Activated T-helper 2 cell treated with anti-CD3 and anti-CD28 coated beads, Interferon-gamma antibody, Interleukin-2, Interleukin-4, amounts not matched to agents 10 μg/mL and 5 μg/mL and 100 μg/mL, durations not matched to agents 14 hours and 24 hours and 36 hours (primary cell): ENCODE measurements at regions of chr12 and their contacts with region 1.

Region 1: GRCh38 chr12:19312637-19313036 is 126.7 kb upstream of the AEBP2 start:
- DNase-seq: no peak
- H3K4me3 Mint-ChIP-seq: no peak overlapping the region
- H3K27ac Mint-ChIP-seq: peak overlapping the region; percentile 20
- H3K4me1 Mint-ChIP-seq: peaks cover 20% of the 10 kb centered on the region
- H3K27me3 Mint-ChIP-seq: no peaks in the 10 kb centered on the region

Region 2: DNA sequence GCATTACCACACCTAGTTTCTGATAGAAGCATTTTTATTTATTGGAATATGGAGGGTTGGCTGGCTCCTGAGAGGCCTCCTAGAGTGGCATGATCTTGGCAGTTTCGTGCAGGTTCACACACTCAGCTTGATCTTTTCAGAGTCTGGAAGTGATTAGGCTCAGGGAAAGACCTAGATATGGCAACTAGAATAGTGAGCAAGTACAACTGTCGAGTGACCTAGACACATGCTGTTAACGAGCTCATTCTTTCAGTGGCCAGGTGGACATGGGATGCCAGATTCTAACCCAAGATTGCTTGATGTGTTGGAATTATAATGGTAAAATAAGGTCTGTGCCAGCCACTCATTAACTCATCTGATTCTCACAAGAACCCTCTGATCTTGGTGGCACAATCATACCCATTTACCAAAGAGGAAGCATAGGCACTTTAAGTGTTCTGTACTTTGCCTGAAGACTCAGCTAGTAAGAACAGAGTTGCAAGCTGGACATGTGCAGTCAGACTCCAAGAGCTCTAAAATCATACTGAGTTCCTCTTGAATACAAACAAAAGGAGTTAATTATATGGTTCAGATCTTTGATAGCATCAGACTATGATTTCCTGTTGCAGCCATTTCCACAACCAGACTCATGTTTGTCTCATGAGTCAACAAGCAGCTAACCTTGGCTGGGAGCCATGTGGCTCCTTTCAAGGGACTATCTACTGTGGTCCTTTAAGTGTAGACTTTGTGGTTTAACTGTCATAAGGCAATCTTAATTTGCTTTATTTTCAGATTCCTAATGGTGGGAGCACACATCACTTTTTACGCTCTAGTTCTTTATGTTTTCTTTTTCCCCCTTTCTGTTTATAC is 38.9 kb before region 1 on chr12:
- intact Hi-C with region 1: loop called (anchors 5 kb)
- DNase-seq: peak; percentile 18
- H3K4me3 Mint-ChIP-seq: no peak overlapping the region
- H3K27ac Mint-ChIP-seq: peak overlapping the region; percentile 20
- H3K4me1 Mint-ChIP-seq: peaks cover 19% of the 10 kb centered on the region
- H3K27me3 Mint-ChIP-seq: no peaks in the 10 kb centered on the region

Region 3: GRCh38 chr12:19288603-19289244 is 23.9 kb before region 1 on chr12:
- intact Hi-C with region 1: no loop called
- DNase-seq: no peak
- H3K4me3 Mint-ChIP-seq: no peak overlapping the region
- H3K27ac Mint-ChIP-seq: no peak overlapping the region
- H3K4me1 Mint-ChIP-seq: no peaks in the 10 kb centered on the region
- H3K27me3 Mint-ChIP-seq: no peaks in the 10 kb centered on the region

Region 4: DNA sequence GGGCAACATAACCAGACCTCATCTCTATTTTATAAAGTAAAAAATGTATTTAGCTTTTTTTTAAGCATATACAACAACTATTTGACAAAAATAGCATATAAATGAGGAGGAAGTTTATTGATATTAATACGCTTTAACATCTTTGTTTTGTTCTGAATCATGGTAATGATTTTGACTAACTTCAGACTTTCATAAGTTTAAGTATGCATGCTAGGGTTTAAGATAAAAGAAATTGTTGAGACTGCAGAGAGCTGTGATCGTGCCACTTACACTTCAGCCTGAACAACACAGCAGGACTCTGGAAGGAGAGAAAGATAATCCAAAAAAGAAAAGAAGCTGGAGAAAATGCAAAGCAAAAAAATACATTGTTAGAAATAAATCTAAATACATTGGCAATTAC is 38.7 kb after region 1 on chr12:
- intact Hi-C with region 1: no loop called
- DNase-seq: no peak
- H3K4me3 Mint-ChIP-seq: no peak overlapping the region
- H3K27ac Mint-ChIP-seq: no peak overlapping the region
- H3K4me1 Mint-ChIP-seq: no peaks in the 10 kb centered on the region
- H3K27me3 Mint-ChIP-seq: no peaks in the 10 kb centered on the region

Region 5: DNA sequence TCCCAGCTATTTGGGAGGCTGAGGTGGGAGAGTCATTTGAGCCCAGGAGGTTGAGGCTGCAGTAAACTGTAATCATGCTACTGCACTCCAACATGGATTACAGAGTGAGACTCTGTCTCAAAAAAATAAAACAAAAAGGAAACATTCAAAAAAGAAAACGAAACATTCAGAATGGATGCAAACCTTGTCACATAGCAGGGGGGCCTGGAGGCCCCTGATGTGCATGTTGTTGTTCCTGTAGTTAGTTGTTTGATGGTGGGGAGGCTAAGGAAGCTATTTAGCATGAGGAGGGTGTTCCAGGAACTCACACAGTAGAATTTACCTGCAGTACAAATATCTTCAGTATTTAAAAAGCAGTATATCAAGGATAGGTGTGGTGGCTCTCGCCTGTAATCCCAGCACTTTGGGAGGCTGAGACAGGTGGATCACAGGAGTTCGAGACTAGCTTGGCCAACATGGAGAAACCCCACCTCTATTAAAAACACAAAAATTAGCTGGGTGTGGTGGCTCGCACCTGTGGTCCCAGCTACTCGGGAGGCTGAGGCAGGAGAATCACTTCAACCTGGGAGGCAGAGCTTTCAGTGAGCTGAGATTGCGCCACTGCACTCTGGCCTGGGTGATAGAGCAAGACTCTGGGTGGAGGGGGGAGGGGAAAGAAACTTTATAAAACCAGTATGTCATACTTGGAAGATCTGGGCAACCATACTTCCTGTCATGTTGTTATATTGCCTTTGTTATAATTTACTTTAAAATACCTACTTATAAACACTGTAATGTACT is 109.1 kb after region 1 on chr12:
- intact Hi-C with region 1: no loop called
- DNase-seq: no peak
- H3K4me3 Mint-ChIP-seq: no peak overlapping the region
- H3K27ac Mint-ChIP-seq: no peak overlapping the region
- H3K4me1 Mint-ChIP-seq: peaks cover 6% of the 10 kb centered on the region
- H3K27me3 Mint-ChIP-seq: no peaks in the 10 kb centered on the region

Region 6: GRCh38 chr12:19491863-19492262 is 179.2 kb after region 1 on chr12:
- intact Hi-C with region 1: no loop called
- DNase-seq: no peak
- H3K4me3 Mint-ChIP-seq: no peak overlapping the region
- H3K27ac Mint-ChIP-seq: peak overlapping the region; percentile 70
- H3K4me1 Mint-ChIP-seq: peaks cover 26% of the 10 kb centered on the region
- H3K27me3 Mint-ChIP-seq: no peaks in the 10 kb centered on the region